Posterior vena cava (tissue), 2 donors: ENCODE measurements at regions of chr6 and their contacts with region 1.

Region 1: GRCh38 chr6:14086701-14087100 is 30.9 kb upstream of the CD83 start:
- DNase-seq: no peak

Region 2: GRCh38 chr6:13466304-13467215 is 620.1 kb before region 1 on chr6:
- intact Hi-C with region 1: no loop called
- DNase-seq: no peak

Region 3: GRCh38 chr6:14058029-14058695 is 28.5 kb before region 1 on chr6:
- intact Hi-C with region 1: loop called in 1 of 2 experiments (anchors 1 kb)
- DNase-seq: no peak

Region 4: DNA sequence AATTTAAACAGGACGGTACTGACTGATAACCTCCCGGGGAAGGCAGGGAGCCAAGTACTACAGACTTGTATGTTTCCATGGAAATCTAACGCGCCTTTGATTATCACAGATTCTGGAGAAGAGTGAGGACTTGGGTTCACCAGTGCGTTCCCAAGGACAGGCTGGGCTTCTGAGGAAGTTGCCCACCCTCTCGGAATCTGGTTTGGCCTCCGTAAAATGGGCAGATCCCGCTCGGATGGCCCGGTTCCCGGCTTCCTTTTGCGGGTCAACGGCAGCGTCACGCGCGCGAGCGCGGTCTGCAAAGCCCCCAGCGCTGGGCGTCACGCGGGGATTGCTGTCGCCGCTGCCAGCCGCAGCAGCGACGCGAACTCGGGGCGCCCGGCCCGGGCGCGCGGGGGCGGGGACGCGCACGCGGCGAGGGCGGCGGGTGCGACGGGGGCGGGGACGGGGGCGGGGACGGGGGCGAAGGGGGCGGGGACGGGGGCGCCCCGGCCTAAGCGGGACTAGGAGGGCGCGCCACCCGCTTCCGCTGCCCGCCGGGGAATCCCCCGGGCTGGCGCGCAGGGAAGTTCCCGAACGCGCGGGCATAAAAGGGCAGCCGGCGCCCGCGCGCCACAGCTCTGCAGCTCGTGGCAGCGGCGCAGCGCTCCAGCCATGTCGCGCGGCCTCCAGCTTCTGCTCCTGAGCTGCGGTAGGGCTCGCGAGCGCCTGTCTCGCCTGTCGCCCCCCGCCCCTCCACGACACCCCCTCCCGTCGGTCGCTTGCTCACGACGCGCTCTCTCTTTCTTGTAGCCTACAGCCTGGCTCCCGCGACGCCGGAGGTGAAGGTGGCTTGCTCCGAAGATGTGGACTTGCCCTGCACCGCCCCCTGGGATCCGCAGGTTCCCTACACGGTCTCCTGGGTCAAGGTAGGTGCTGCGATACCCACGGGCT is 30.7 kb after region 1 on chr6 and contains the start of gene CD83:
- intact Hi-C with region 1: loop called in 1 of 2 experiments (anchors 1 kb)
- DNase-seq: peak; percentile 89
- total RNA-seq, gene CD83: 1.3 to 2.9 TPM

Region 5: GRCh38 chr6:15194453-15194852 is 1107.8 kb after region 1 on chr6:
- intact Hi-C with region 1: no loop called
- DNase-seq: no peak